ENCODE measurements at regions of chr17 and their contacts with region 1.

Region 1: DNA sequence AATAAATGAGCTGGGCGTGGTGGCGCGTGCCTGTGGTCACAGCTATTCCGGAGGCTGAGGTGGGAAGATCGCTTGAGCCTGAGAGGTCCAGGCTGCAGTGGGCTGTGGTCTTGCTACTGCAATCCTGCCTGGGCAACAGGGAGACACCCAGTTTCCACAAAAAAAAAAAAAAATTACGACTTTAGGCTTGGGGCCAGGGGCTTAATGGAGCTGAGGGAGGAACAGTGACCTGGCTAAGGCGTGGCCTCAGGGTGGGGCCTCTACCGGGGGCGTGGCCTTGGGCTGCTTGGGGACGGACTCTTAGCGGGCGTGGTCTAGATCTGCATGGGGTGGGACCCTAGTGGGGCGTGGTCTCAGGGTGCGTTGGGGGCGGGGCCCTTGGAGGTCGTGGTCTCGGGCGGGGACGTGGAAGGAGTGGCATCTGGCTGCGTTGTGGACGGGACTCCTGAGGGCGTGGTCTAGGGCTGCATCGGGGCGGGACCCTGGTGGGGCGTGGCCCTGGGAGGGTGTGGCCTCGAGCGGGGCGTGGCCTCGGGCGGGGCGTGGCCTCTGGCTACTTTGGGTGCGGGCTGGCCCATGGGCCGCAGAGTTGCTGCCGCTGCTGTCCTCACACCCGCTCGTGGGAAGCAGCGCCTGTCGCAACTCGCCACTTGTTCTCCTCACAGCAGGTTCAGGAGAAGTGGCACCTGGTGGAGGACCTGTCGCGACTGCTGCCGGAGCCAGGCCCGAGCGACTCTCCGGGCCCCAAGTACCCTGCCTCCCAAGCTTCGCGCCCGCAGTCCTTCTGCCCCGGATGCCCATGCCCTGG is 5.8 kb upstream of the C17orf99 start:
- DNase-seq: peak; percentile 98
- H3K4me3 Mint-ChIP-seq: peak overlapping the region; percentile 31
- H3K27ac Mint-ChIP-seq: peak overlapping the region; percentile 63
- H3K4me1 Mint-ChIP-seq: peaks cover 57% of the 10 kb centered on the region
- H3K27me3 Mint-ChIP-seq: no peaks in the 10 kb centered on the region

Region 2: GRCh38 chr17:78128551-78129350 is 11.6 kb before region 1 on chr17 and contains the start of gene TMC6:
- CTCF ChIA-PET with region 1: interaction called, 99 read pairs
- POLR2A ChIA-PET with region 1: interaction called, 7 read pairs
- intact Hi-C with region 1: loop called (anchors 1 kb)
- DNase-seq: peak; percentile 85
- H3K4me3 Mint-ChIP-seq: peak within 1 kb of the TSS; percentile 97
- H3K27ac Mint-ChIP-seq: peak within 1 kb of the TSS; percentile 95
- H3K4me1 Mint-ChIP-seq: peaks cover 51% of the 10 kb centered on the region
- H3K27me3 Mint-ChIP-seq: no peaks in the 10 kb centered on the region
- total RNA-seq, gene TMC6: 157 to 162 TPM

Region 3: DNA sequence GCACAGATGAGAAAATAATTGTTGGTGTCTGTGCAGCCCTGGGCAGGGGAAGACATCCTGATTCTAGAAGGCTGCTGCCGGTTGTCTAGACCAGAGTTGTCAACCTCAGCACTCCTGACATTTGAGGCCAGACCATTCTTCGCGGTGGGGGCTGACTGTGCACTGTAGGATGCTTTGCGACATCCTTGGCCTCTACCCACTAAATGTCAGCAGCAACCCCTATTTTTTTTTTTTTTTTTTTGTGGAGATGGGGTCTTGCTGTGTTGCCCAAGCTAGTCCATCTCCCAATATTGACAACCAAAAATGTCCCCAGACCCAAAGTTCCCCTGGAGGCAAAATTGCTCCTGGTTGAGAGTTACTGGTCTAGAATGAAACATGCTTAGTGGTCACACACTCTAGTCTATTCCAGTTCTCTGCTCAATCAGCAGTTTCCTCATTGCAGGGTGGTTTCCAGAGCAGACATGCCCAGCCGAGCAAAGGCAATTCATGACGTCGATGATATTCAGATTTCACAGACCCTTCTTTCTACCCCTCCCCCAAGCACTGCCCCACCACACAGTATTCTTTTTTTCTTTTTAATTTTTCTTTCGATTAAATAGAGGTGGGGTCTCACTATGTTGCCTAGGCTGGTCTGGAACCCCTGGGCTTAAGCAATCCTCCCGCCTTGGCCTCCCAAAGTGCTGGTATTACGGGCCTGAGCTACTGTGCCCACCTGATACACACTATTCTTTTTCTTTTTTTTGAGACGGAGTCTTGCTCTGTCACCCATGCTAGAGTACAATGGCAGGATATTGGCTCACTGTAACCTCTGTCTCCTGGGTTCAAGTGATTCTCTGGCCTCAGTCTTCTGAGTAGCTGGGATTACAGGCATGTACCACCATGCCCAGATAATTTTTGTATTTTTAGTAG is 14.8 kb after region 1 on chr17:
- CTCF ChIA-PET with region 1: interaction called, 11 read pairs
- POLR2A ChIA-PET with region 1: interaction called, 5 read pairs
- intact Hi-C with region 1: no loop called
- DNase-seq: no peak
- H3K4me3 Mint-ChIP-seq: no peak overlapping the region
- H3K27ac Mint-ChIP-seq: no peak overlapping the region
- H3K4me1 Mint-ChIP-seq: peaks cover 8% of the 10 kb centered on the region
- H3K27me3 Mint-ChIP-seq: no peaks in the 10 kb centered on the region

Measured in activated CD4-positive, alpha-beta memory T cell treated with anti-CD3 and anti-CD28 coated beads for 36 hours (primary cell).